Activated CD8-positive, alpha-beta T cell treated with anti-CD3 and anti-CD28 coated beads, Interleukin-2, amount 10 ng/mL, durations not matched to agents 7 days and 5 days (primary cell): ENCODE measurements at regions of chr14 and their contacts with region 1.

Region 1: GRCh38 chr14:24195191-24196070 is at the start of gene TM9SF1:
- DNase-seq: peak; percentile 92
- ATAC-seq: peak; percentile 88
- H3K4me3 Mint-ChIP-seq: peak within 1 kb of the TSS; percentile 88
- H3K27ac Mint-ChIP-seq: peak within 1 kb of the TSS; percentile 96
- H3K4me1 Mint-ChIP-seq: peaks cover 56% of the 10 kb centered on the region
- H3K27me3 Mint-ChIP-seq: no peaks in the 10 kb centered on the region
- total RNA-seq, gene TM9SF1: 29.3 to 32.8 TPM

Region 2: GRCh38 chr14:23816371-23816770 is 379.1 kb before region 1 on chr14:
- CTCF ChIA-PET with region 1: no interaction called
- POLR2A ChIA-PET with region 1: no interaction called
- DNase-seq: no peak
- ATAC-seq: no peak
- H3K4me3 Mint-ChIP-seq: no peak overlapping the region
- H3K27ac Mint-ChIP-seq: no peak overlapping the region
- H3K4me1 Mint-ChIP-seq: no peaks in the 10 kb centered on the region
- H3K27me3 Mint-ChIP-seq: peaks cover 3% of the 10 kb centered on the region

Region 3: GRCh38 chr14:24179961-24180796 is 15.3 kb before region 1 on chr14:
- CTCF ChIA-PET with region 1: no interaction called
- POLR2A ChIA-PET with region 1: interaction called, 14 read pairs
- DNase-seq: no peak
- ATAC-seq: no peak
- H3K4me3 Mint-ChIP-seq: no peak overlapping the region
- H3K27ac Mint-ChIP-seq: no peak overlapping the region
- H3K4me1 Mint-ChIP-seq: peaks cover under 1% of the 10 kb centered on the region
- H3K27me3 Mint-ChIP-seq: no peaks in the 10 kb centered on the region

Region 4: DNA sequence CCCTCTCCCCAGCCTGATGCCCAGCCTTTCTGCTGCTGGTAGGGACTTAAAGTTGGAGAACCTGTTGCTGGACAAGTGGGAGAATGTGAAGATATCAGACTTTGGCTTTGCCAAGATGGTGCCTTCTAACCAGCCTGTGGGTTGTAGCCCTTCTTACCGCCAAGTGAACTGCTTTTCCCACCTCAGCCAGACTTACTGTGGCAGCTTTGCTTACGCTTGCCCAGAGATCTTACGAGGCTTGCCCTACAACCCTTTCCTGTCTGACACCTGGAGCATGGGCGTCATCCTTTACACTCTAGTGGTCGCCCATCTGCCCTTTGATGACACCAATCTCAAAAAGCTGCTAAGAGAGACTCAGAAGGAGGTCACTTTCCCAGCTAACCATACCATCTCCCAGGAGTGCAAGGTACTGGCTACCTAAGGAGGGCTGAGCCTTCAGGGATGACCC is 11.7 kb after region 1 on chr14:
- CTCF ChIA-PET with region 1: interaction called, 22 read pairs
- POLR2A ChIA-PET with region 1: interaction called, 87 read pairs
- DNase-seq: no peak
- ATAC-seq: no peak
- H3K4me3 Mint-ChIP-seq: no peak overlapping the region
- H3K27ac Mint-ChIP-seq: peak overlapping the region; percentile 46
- H3K4me1 Mint-ChIP-seq: peaks cover 21% of the 10 kb centered on the region
- H3K27me3 Mint-ChIP-seq: no peaks in the 10 kb centered on the region

Region 5: GRCh38 chr14:24513009-24513408 is 317.6 kb after region 1 on chr14:
- CTCF ChIA-PET with region 1: no interaction called
- POLR2A ChIA-PET with region 1: no interaction called
- DNase-seq: no peak
- ATAC-seq: no peak
- H3K4me3 Mint-ChIP-seq: no peak overlapping the region
- H3K27ac Mint-ChIP-seq: no peak overlapping the region
- H3K4me1 Mint-ChIP-seq: peaks cover 20% of the 10 kb centered on the region
- H3K27me3 Mint-ChIP-seq: peaks cover 30% of the 10 kb centered on the region